ENCODE measurements at regions of chr17 and their contacts with region 1.

Region 1: GRCh38 chr17:43907425-43907981 is at the start of gene MPP2:
- DNase-seq: peak; percentile 34 to 77 (median 61)
- ATAC-seq: peak; percentile 50
- H3K4me3 ChIP-seq: peak within 1 kb of the TSS; percentile 67 to 72
- H3K4me3 Mint-ChIP-seq: peak within 1 kb of the TSS; percentile 94
- H3K27ac ChIP-seq: peak within 1 kb of the TSS; percentile 31 to 65
- H3K27ac Mint-ChIP-seq: peak within 1 kb of the TSS; percentile 94
- H3K4me1 ChIP-seq: peaks cover 20% of the 10 kb centered on the region
- H3K4me1 Mint-ChIP-seq: peaks cover 13% of the 10 kb centered on the region
- H3K27me3 ChIP-seq: peaks cover 0 to 20% of the 10 kb centered on the region in 2 experiments
- H3K27me3 Mint-ChIP-seq: peaks cover 9% of the 10 kb centered on the region
- CTCF ChIP-seq: no peak
- total RNA-seq, gene MPP2: 9.6 to 11.8 TPM

Region 2: GRCh38 chr17:43927060-43927864 is 19.8 kb after region 1 on chr17:
- CTCF ChIA-PET with region 1: interaction called, 92 read pairs
- POLR2A ChIA-PET with region 1: interaction called, 4 read pairs
- intact Hi-C with region 1: loop called in 1 of 2 experiments (anchors 2 kb)
- DNase-seq: peak in 1 of 9 experiments; percentile 32
- ATAC-seq: peak; percentile 63
- H3K4me3 ChIP-seq: peak overlapping the region; percentile 21 to 65
- H3K4me3 Mint-ChIP-seq: peak overlapping the region; percentile 86
- H3K27ac ChIP-seq: peak overlapping the region in 1 of 2 experiments; percentile 35
- H3K27ac Mint-ChIP-seq: peak overlapping the region; percentile 88
- H3K4me1 ChIP-seq: peaks cover 23% of the 10 kb centered on the region
- H3K4me1 Mint-ChIP-seq: peaks cover 26% of the 10 kb centered on the region
- H3K27me3 ChIP-seq: peaks cover 0 to 3% of the 10 kb centered on the region in 2 experiments
- H3K27me3 Mint-ChIP-seq: no peaks in the 10 kb centered on the region
- CTCF ChIP-seq: no peak

Region 3: DNA sequence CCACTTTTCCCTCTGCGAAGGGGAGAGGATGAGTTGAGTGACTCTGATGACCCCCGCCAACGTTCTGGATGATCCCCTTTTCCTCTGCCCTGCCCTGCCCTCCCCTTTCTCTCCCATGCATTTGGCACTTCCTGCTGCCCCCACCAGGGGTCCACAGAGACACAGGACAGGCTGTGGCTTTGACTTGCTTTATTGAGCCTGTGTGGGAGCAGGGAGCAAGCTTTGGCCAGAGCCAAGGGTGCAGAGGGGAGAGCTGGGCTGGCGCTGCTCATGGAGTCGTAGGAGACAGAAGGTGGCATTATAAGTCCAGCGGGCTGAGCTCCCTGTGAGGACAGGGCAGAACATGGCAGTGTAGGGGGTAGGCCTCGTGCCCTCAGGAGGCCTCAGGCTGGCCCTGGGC is 33.1 kb after region 1 on chr17:
- CTCF ChIA-PET with region 1: interaction called, 45 read pairs
- POLR2A ChIA-PET with region 1: interaction called, 5 read pairs
- intact Hi-C with region 1: no loop called
- DNase-seq: peak in 2 of 9 experiments; percentile 24 to 32
- ATAC-seq: no peak
- H3K4me3 ChIP-seq: no peak overlapping the region
- H3K4me3 Mint-ChIP-seq: no peak overlapping the region
- H3K27ac ChIP-seq: no peak overlapping the region
- H3K27ac Mint-ChIP-seq: no peak overlapping the region
- H3K4me1 ChIP-seq: peaks cover 12% of the 10 kb centered on the region
- H3K4me1 Mint-ChIP-seq: peaks cover 14% of the 10 kb centered on the region
- H3K27me3 ChIP-seq: no peaks in the 10 kb centered on the region
- H3K27me3 Mint-ChIP-seq: peaks cover 4% of the 10 kb centered on the region
- CTCF ChIP-seq: no peak

Region 4: GRCh38 chr17:43994272-43995149 is 87.0 kb after region 1 on chr17:
- CTCF ChIA-PET with region 1: interaction called, 9 read pairs
- POLR2A ChIA-PET with region 1: no interaction called
- intact Hi-C with region 1: loop called in 1 of 2 experiments (anchors 1 kb)
- DNase-seq: peak; percentile 31 to 75 (median 65)
- ATAC-seq: peak; percentile 98
- H3K4me3 ChIP-seq: peak overlapping the region in 1 of 2 experiments; percentile 32
- H3K4me3 Mint-ChIP-seq: no peak overlapping the region
- H3K27ac ChIP-seq: no peak overlapping the region
- H3K27ac Mint-ChIP-seq: no peak overlapping the region
- H3K4me1 ChIP-seq: peaks cover 5% of the 10 kb centered on the region
- H3K4me1 Mint-ChIP-seq: peaks cover 3% of the 10 kb centered on the region
- H3K27me3 ChIP-seq: peaks cover 7 to 9% of the 10 kb centered on the region in 2 experiments
- H3K27me3 Mint-ChIP-seq: peaks cover 19% of the 10 kb centered on the region
- CTCF ChIP-seq: peak; percentile 93

Region 5: DNA sequence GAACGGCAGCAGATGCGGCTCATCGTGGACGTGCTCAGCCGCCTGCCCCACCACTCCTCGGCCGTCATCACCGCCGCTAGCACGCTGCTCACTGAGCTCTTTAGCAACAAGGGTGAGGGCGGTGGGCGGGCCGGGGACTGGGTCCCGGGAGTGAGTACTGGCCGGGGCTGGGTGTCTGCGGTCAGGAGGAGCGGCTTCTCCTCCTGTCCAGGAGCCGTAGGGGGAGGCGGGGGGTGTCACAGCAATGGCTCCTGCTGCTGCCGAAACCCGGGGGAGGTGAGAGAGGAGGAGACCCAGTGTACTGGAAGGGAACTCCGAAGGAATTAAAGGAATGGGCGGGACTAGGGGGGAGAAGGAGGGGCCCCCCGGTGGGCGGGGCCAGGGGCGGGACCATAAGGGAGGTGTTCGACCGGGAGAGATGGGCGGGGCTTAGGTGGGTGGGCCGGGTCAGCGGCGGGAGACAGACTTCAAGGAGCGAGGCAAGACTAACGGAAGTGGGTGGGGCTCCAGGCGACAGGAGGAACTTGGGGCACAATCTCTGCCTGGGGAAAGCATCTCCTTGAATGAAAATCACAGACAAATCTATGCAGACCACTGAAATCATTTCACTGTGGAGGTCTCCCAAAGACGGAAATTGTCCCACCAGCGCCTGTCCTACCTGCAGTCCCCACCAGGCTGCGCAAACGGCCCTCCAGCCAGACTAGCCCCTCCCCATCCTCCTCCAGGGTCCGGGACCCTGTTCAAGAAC is 99.3 kb after region 1 on chr17:
- CTCF ChIA-PET with region 1: no interaction called
- POLR2A ChIA-PET with region 1: no interaction called
- intact Hi-C with region 1: loop called (anchors 1 to 2 kb)
- DNase-seq: peak; percentile 91 to 99 (median 97)
- ATAC-seq: peak; percentile 88
- H3K4me3 ChIP-seq: peak overlapping the region; percentile 50 to 60
- H3K4me3 Mint-ChIP-seq: peak overlapping the region; percentile 88
- H3K27ac ChIP-seq: peak overlapping the region in 1 of 2 experiments; percentile 22
- H3K27ac Mint-ChIP-seq: no peak overlapping the region
- H3K4me1 ChIP-seq: peaks cover 30% of the 10 kb centered on the region
- H3K4me1 Mint-ChIP-seq: peaks cover 21% of the 10 kb centered on the region
- H3K27me3 ChIP-seq: peaks cover 0 to 17% of the 10 kb centered on the region in 2 experiments
- H3K27me3 Mint-ChIP-seq: peaks cover 5% of the 10 kb centered on the region
- CTCF ChIP-seq: no peak

Region 6: DNA sequence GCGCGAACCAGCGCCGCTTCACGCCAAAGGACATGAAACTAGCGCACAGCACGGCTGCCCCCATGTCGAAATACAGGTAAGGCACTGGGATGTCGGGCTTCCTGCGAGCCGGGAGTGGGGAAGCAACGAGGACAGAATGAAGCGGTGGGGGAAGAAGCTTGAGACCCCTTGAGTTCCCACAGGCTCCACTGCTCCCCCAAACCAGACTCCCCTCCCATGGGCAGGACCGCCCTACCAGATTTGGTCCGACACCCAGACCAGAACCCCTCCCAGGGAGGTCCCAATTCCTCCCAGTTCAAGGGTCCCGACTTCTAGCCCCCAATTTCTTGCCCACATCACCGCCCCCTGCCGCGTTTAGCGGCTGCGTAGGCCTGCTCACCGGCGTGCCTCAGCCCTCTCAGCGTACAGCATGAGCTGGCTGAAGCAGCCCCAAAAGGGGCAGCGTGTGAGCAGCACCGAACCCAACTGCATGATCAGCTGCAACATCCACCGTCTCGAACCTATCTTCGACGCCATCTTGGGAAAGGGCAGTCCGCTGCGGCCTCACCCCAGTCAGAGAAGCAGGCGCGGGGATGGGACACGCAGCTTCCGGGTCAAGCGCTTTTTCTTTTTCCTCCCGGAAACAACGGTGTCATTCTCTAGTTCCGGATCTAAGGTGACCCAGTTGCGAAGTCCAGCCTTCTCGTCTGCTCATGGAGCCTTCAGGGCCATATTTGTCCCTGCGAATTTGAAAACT is 107.1 kb after region 1 on chr17 and contains the start of gene TMEM101:
- CTCF ChIA-PET with region 1: no interaction called
- POLR2A ChIA-PET with region 1: no interaction called
- intact Hi-C with region 1: loop called in 1 of 2 experiments (anchors 2 kb)
- DNase-seq: peak; percentile 79 to 95 (median 90)
- ATAC-seq: peak; percentile 99
- H3K4me3 ChIP-seq: peak within 1 kb of the TSS; percentile 81 to 91
- H3K4me3 Mint-ChIP-seq: peak within 1 kb of the TSS; percentile 100
- H3K27ac ChIP-seq: peak within 1 kb of the TSS; percentile 51 to 55
- H3K27ac Mint-ChIP-seq: peak within 1 kb of the TSS; percentile 95
- H3K4me1 ChIP-seq: peaks cover 11% of the 10 kb centered on the region
- H3K4me1 Mint-ChIP-seq: peaks cover 10% of the 10 kb centered on the region
- H3K27me3 ChIP-seq: no peaks in the 10 kb centered on the region
- H3K27me3 Mint-ChIP-seq: no peaks in the 10 kb centered on the region
- CTCF ChIP-seq: no peak
- total RNA-seq, gene TMEM101: 8.1 to 8.7 TPM

Region 7: DNA sequence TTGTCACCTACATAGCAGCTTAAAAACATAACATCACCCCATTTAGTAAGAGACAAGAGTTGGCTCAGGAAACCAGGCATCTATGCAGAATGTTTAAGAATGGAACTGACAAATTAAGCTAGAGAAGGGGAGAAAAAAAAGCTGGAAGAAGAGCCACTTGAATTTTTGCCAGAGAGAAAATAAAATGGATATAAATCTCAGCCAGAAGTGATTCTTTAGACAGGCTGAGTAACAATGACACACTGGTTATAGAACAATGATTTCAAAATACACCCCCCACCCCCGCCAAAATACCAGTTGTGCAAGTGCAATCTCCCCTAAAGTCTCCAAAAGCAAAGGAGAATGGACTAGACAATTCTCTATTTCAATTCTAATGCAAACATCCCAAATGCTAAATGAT is 136.6 kb after region 1 on chr17:
- CTCF ChIA-PET with region 1: interaction called, 10 read pairs
- POLR2A ChIA-PET with region 1: interaction called, 3 read pairs
- intact Hi-C with region 1: no loop called
- DNase-seq: no peak
- ATAC-seq: no peak
- H3K4me3 ChIP-seq: no peak overlapping the region
- H3K4me3 Mint-ChIP-seq: no peak overlapping the region
- H3K27ac ChIP-seq: no peak overlapping the region
- H3K27ac Mint-ChIP-seq: peak overlapping the region; percentile 30
- H3K4me1 ChIP-seq: no peaks in the 10 kb centered on the region
- H3K4me1 Mint-ChIP-seq: peaks cover 26% of the 10 kb centered on the region
- H3K27me3 ChIP-seq: no peaks in the 10 kb centered on the region
- H3K27me3 Mint-ChIP-seq: no peaks in the 10 kb centered on the region
- CTCF ChIP-seq: no peak

Region 8: DNA sequence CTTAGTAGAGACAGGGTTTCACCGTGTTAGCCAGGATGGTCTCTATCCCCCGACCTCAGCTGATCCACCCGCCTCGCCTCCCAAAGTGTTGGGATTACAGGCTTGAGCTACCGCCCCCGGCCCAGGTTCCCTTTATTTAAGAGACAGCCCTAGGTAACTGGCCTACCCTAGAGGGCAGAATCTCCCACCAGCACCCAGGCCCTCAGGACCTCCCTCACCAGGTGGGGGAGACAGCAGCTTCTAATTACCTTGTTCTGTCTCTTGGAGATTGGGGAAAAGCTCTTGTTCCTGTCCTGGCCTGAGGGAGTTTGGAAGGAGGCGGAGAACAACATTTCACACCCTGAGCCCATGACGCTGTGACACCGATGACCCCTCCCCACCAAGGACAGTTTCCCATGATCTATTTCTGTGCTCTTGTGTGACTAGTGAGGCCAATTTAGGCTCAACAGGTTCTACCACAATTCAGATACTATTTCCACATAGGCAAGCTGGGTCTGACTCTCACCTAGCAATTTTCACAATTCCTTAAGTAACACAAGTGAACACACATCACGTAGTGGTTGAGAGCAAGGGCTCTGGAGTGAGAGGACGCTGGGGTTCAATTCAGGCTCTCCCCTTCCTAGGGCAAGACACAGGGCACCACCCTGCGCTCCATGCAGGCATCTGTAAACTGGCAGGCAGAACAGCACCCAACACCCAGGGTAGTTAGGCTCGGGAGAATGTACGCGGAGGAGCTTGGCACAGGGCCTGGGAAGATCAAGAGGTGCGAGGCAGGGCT is 195.5 kb after region 1 on chr17:
- CTCF ChIA-PET with region 1: no interaction called
- POLR2A ChIA-PET with region 1: no interaction called
- intact Hi-C with region 1: no loop called
- DNase-seq: no peak
- ATAC-seq: no peak
- H3K4me3 ChIP-seq: no peak overlapping the region
- H3K4me3 Mint-ChIP-seq: no peak overlapping the region
- H3K27ac ChIP-seq: no peak overlapping the region
- H3K27ac Mint-ChIP-seq: no peak overlapping the region
- H3K4me1 ChIP-seq: no peaks in the 10 kb centered on the region
- H3K4me1 Mint-ChIP-seq: peaks cover 1% of the 10 kb centered on the region
- H3K27me3 ChIP-seq: no peaks in the 10 kb centered on the region
- H3K27me3 Mint-ChIP-seq: no peaks in the 10 kb centered on the region
- CTCF ChIP-seq: no peak

Measured in CD8-positive, alpha-beta T cell (primary cell).